MCF 10A (cell line): ENCODE measurements at regions of chr10 and their contacts with region 1.

Region 1: GRCh38 chr10:48363617-48364355 is 57.3 kb downstream of the MAPK8 start:
- DNase-seq: peak; percentile 79
- H3K4me3 Mint-ChIP-seq: peak overlapping the region; percentile 2
- H3K27ac Mint-ChIP-seq: no peak overlapping the region
- H3K4me1 Mint-ChIP-seq: peaks cover 23% of the 10 kb centered on the region
- H3K27me3 Mint-ChIP-seq: no peaks in the 10 kb centered on the region
- CTCF ChIP-seq: peak; percentile 72

Region 2: GRCh38 chr10:48377751-48378535 is 14.2 kb after region 1 on chr10:
- CTCF ChIA-PET with region 1: interaction called, 11 read pairs
- POLR2A ChIA-PET with region 1: interaction called, 4 read pairs
- intact Hi-C with region 1: no loop called
- DNase-seq: no peak
- H3K4me3 Mint-ChIP-seq: no peak overlapping the region
- H3K27ac Mint-ChIP-seq: no peak overlapping the region
- H3K4me1 Mint-ChIP-seq: no peaks in the 10 kb centered on the region
- H3K27me3 Mint-ChIP-seq: no peaks in the 10 kb centered on the region
- CTCF ChIP-seq: no peak

Region 3: DNA sequence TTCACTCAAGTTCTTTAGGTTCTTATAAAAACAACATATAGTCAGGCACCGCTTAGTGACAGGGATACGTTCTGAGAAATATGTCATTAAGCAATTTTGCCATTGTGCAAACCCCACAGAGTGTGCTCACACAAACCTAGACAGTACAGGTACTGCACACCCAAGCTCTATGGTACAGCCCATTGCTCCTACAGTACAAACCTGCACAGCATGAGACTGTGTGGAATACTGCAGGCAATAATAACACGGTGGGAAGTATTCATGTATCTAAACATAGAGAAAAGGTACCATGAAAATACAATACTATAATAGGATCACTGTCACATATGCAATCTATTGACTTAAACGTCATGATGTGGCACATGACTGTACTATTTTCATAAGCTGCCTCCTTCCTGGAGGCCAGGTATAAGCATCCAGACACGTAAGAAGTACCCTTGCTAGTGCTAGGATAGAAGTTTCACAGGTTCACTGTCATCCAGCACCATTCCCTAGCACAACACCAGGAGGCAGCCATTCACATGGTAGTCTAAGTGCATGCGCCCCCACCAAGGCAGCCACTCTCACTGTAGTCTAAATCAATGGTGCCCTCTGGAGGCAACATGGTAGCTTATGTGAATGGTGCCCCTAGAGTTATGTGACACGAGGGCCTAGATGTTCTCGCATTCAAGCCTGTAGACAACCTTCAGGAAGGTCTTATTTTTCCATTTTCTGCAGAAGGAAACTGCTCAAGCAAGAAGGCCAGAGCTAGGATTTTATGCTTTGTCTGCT is 142.5 kb after region 1 on chr10:
- CTCF ChIA-PET with region 1: interaction called, 17 read pairs
- POLR2A ChIA-PET with region 1: interaction called, 7 read pairs
- intact Hi-C with region 1: loop called (anchors 1 kb)
- DNase-seq: peak; percentile 48
- H3K4me3 Mint-ChIP-seq: no peak overlapping the region
- H3K27ac Mint-ChIP-seq: no peak overlapping the region
- H3K4me1 Mint-ChIP-seq: peaks cover 5% of the 10 kb centered on the region
- H3K27me3 Mint-ChIP-seq: no peaks in the 10 kb centered on the region
- CTCF ChIP-seq: peak; percentile 21

Region 4: DNA sequence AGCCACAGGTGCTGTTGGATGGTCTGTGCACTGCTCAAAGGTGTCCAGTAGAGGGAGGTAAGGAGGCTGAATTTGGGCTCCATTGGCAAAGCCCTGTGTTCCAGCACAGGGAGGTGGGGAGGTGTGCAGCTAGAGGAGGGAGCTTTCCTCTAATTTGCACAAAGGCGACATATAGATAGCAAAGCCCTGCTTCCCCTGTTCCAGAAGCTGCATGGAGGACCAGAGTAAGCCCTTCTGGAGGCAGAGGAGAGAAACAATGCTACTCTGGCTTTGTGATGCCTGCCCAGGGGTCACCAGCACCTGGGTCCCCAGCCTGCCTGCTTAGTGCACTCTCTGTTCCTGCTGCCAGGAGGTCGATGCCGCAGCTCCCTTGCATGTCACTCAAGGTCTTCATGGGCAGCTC is 244.5 kb after region 1 on chr10:
- CTCF ChIA-PET with region 1: interaction called, 20 read pairs
- POLR2A ChIA-PET with region 1: no interaction called
- intact Hi-C with region 1: loop called (anchors 1 kb)
- DNase-seq: peak; percentile 75
- H3K4me3 Mint-ChIP-seq: no peak overlapping the region
- H3K27ac Mint-ChIP-seq: no peak overlapping the region
- H3K4me1 Mint-ChIP-seq: peaks cover 26% of the 10 kb centered on the region
- H3K27me3 Mint-ChIP-seq: no peaks in the 10 kb centered on the region
- CTCF ChIP-seq: peak; percentile 70